PC-9 (cell line): ENCODE measurements at regions of chr5 and their contacts with region 1.

Region 1: GRCh38 chr5:6722015-6722414 is 8.8 kb downstream of the TENT4A start:
- DNase-seq: no peak
- H3K4me3 ChIP-seq: no peak overlapping the region
- H3K27ac ChIP-seq: no peak overlapping the region
- H3K4me1 ChIP-seq: peaks cover 5% of the 10 kb centered on the region
- H3K27me3 ChIP-seq: no peaks in the 10 kb centered on the region
- CTCF ChIP-seq: no peak

Region 2: GRCh38 chr5:6704361-6704851 is 17.6 kb before region 1 on chr5:
- CTCF ChIA-PET with region 1: no interaction called
- POLR2A ChIA-PET with region 1: no interaction called
- intact Hi-C with region 1: no loop called
- DNase-seq: peak; percentile 52 to 78
- H3K4me3 ChIP-seq: no peak overlapping the region; the same call in 1 of the 2 replicates
- H3K27ac ChIP-seq: peak overlapping the region; percentile 46
- H3K4me1 ChIP-seq: peaks cover 26% of the 10 kb centered on the region
- H3K27me3 ChIP-seq: no peaks in the 10 kb centered on the region
- CTCF ChIP-seq: no peak

Region 3: DNA sequence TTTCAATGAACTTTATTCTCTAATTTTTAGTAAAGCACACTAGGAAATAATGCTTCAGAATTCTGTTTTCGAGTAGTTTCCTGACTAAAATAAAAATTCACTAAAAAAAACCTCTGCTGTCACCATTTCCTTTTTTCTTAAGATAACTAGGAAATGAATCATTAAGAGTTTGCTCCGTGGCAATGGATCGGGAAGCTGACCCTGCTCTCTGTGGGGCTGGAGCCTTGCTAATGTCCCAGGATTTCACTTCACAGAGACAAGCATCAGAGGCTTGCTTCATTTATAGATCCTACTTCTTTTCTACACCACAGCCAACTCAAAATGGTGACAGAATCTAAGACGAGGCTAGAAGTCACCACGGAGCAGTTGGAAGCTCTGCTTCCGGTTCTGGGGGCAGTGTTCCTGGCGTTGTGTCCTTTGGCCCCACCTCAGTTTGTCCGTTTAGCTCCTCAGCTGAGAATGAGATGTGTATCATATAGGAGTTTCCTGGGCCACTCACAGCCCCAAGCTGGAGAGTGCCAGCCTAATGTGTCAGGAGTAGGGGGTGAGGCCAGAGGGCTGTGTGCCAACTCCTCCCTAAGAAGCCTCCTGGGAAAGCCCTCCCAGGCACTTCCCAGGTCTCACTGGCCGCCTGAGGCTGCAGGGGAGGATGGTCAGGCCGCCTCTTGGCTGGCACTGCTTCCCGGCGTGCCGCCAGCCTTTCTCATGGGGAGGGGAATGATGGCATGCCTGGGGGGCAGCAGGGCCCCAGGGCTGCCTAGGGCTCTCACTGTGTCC is 10.8 kb after region 1 on chr5:
- CTCF ChIA-PET with region 1: interaction called, 16 read pairs
- POLR2A ChIA-PET with region 1: no interaction called
- intact Hi-C with region 1: no loop called
- DNase-seq: no peak
- H3K4me3 ChIP-seq: no peak overlapping the region
- H3K27ac ChIP-seq: no peak overlapping the region
- H3K4me1 ChIP-seq: no peaks in the 10 kb centered on the region
- H3K27me3 ChIP-seq: no peaks in the 10 kb centered on the region
- CTCF ChIP-seq: no peak

Region 4: DNA sequence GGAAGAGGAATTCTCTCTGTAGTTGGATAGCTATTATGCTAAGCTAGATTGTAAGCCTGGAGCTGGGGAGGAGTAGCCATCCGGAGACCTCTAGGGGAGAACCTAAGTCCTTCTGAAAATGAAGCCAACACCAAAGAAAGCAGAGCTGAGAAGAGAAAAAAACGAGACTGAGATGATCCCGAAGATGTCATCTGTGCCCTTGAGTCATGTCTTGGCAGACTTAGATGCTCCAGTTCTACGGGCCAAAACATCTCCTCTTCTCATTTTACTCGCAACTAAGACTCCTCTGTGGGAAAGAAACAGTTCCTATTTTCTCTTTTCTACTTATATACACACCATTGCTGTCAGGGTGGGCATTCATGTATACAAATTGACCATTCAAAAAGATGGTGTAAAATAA is 639.6 kb after region 1 on chr5:
- CTCF ChIA-PET with region 1: no interaction called
- POLR2A ChIA-PET with region 1: no interaction called
- intact Hi-C with region 1: no loop called
- DNase-seq: no peak
- H3K4me3 ChIP-seq: no peak overlapping the region
- H3K27ac ChIP-seq: no peak overlapping the region
- H3K4me1 ChIP-seq: no peaks in the 10 kb centered on the region
- H3K27me3 ChIP-seq: no peaks in the 10 kb centered on the region
- CTCF ChIP-seq: no peak